ENCODE measurements at regions of chr10 and their contacts with region 1.

Region 1: DNA sequence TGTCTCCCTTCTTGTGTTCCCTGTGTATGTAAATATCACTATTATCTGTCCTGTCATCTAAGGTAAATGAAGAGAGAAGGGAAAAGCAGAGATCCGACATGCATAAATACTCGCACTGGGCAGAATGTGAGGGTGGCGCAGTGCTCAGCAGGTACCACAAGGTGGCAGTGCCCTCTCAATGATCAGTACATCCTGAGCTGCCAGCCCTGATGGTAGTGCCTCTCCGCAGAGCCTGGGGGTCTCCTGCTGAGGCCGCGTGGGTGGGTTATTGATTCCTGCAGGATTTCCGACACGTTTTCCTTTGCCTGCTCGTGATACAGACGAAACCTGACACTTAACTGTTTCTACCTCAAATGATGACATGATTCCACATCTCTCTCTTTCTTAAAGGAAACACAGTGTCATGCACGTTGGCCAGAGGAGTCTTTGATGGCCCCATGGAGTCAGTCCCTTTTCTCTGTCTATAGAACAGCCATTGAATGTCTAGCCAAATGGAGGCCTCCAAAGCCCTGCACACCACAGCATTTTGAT is 19.8 kb downstream of the RGR start:
- DNase-seq: peak; percentile 74
- CTCF ChIP-seq: peak; percentile 98

Region 2: GRCh38 chr10:84138478-84139125 is 126.1 kb before region 1 on chr10:
- CTCF ChIA-PET with region 1: no interaction called
- POLR2A ChIA-PET with region 1: no interaction called
- DNase-seq: peak; percentile 14
- CTCF ChIP-seq: no peak

Region 3: DNA sequence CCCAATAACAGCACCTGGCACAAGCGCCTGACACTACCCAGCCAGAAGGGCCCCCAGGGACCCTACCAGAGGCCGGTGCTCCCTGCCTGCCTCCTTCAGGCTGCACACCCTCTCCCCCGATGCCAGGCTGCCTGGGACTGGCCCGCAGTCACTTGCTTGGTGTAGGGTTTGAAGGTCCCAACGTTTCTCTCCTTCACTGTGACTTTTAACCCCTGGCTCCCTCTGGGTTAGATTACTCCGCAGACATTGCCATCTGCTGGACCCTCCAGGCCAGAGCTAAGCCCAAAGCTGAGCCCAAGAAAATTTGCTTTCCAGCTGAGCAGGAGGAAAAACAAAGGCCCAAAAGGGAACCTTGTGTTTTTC is 63.5 kb before region 1 on chr10:
- CTCF ChIA-PET with region 1: no interaction called
- POLR2A ChIA-PET with region 1: no interaction called
- DNase-seq: no peak
- CTCF ChIP-seq: peak; percentile 15

Region 4: GRCh38 chr10:84291384-84291783 is 26.7 kb after region 1 on chr10:
- CTCF ChIA-PET with region 1: interaction called, 13 read pairs
- POLR2A ChIA-PET with region 1: no interaction called
- DNase-seq: no peak
- CTCF ChIP-seq: no peak

Region 5: GRCh38 chr10:84310470-84310869 is 45.8 kb after region 1 on chr10:
- CTCF ChIA-PET with region 1: interaction called, 12 read pairs
- POLR2A ChIA-PET with region 1: no interaction called
- DNase-seq: no peak
- CTCF ChIP-seq: no peak

Region 6: DNA sequence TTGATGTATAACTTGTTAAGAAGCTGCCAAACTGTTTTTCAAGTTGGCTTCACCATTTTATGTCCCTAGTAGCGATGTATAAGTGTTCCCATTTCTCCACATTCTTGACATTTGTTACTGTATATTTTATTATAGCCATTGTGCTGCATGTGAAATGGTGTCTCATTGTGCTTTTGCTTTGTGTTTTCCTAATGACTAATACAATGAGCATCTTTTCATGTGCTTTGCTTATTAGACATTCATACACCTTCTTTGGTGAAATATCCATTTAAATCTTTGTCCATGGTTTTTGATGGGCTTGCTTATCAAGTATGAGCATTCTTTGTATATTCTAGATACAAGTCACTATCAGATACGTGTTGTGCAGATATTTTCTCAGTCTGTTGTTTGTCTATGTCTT is 266.7 kb after region 1 on chr10:
- CTCF ChIA-PET with region 1: interaction called, 326 read pairs
- POLR2A ChIA-PET with region 1: no interaction called
- DNase-seq: no peak
- CTCF ChIP-seq: no peak

Measured in GM10248 (cell line).